G401 (cell line): ENCODE measurements at regions of chr6 and their contacts with region 1.

Region 1: DNA sequence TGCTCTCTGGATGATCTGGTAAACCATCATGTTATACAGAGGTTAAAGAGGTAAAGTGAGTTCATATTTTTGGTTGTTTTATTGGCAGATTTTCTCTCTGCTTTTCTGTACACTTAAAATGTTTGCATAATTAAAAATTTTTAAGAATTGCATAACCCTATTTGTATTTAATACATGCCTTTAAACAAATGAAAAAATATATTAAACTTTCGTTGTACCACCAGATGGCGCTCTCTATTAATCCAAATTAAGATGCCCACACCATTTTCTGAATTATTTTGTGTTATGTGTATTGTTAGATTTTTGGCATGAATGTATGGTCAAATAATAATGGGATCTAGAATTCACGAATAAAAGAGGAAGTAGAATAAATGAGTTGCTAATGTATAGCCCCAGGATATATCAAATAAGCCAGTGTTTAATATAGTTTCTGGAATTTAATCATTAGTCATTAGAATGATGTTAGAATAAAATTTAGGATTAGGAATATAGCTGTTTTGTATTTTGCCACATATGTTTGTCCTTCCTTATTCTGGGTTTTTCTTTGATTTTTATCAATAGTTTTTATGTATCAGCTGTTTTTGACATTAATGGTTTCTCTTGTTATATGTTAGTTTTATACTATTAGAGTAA is 38.9 kb downstream of the SMAP1 start:
- DNase-seq: peak; percentile 71

Region 2: DNA sequence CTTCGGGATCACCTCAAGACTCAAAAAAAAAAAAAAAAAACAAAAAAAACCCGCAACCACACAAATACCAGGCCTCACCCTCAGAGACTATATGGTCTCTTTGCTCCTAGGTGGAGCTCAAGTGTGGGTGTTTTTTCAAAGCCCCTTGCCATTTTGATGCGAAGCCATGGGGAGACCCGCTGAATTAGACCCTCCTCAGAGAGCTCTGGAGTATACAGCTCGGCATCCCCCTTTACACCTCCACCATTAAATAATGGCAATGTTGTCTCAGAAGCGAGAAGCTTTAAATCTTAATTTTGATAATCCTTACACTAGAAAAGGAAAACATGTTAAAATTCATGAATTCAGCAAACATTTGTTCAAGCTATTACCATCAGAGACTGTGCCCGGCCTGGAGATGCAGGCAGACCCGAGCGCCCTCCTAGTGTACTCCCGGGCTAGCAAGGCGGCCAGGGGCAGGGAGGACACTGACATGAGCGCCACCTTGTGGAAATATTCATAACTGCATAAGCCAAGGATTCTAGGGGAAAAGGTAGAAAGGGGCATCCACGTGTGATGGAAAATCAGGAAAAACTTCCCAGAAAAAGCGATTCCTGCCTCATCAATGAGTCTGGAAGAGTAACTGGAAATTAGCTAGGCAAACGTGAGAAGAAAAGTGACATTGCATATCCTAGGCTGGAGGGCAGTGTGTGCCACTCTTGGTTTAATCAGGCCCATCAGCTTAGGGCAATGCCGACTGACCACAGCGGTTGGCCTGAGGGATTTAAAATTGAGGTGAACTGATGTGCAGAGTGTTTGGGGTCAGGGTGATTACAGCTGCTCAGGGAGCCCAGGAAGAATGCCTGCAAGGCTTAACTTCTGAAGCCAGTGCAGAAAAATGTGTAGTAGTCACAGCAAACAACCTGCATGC is 177.7 kb after region 1 on chr6:
- in situ Hi-C with region 1: loop called (anchors 25 kb)
- DNase-seq: peak; percentile 71